ENCODE measurements at regions of chr12 and their contacts with region 1.

Region 1: DNA sequence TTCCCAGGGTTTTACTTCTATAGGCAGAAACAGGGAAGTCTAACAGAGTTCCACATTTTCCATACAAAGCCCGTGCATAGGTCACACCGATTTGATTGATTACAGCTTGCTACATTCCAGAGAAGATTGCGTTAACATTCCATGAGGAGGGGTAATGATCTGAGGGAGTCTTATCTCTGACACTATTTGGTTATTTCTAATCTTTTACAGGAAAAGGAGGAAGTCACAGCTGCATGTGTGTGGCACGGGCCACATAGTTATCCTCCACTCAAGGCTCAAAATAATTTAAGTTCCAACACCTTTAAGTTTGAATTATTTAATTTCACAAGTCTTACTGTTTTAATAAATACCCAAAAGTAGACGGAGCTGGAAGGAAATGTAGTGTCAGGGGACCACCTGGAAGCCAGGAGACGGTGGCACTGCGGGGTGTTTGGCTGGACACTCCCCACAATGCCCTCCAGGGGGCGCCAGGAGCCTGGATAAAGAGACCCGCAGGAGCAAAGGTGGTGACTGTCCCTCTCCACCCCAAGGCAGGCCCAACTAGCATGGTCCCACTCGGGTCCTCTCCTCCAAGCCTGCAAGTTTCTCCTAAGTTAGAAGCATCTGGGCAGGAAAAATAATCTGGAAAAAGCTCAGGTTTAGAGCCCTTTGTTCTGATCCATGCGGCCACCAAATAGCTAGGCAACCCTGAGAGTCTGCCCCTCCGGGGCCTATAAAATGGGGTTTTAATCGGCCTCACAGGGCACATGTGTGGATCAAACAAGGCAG is 20.2 kb downstream of the KRT8 start:
- DNase-seq: peak; percentile 61 to 90 (median 77)
- ATAC-seq: peak; percentile 88
- H3K4me3 ChIP-seq: no peak overlapping the region
- H3K4me3 Mint-ChIP-seq: no peak overlapping the region
- H3K27ac ChIP-seq: no peak overlapping the region
- H3K27ac Mint-ChIP-seq: no peak overlapping the region
- H3K4me1 ChIP-seq: peaks cover 5% of the 10 kb centered on the region
- H3K4me1 Mint-ChIP-seq: peaks cover 6% of the 10 kb centered on the region
- H3K27me3 ChIP-seq: no peaks in the 10 kb centered on the region
- H3K27me3 Mint-ChIP-seq: peaks cover 13% of the 10 kb centered on the region
- CTCF ChIP-seq: peak; percentile 88

Region 2: GRCh38 chr12:52568111-52568510 is 316.6 kb before region 1 on chr12:
- CTCF ChIA-PET with region 1: interaction called, 950 read pairs
- POLR2A ChIA-PET with region 1: no interaction called
- intact Hi-C with region 1: no loop called
- DNase-seq: no peak
- ATAC-seq: no peak
- H3K4me3 ChIP-seq: no peak overlapping the region
- H3K4me3 Mint-ChIP-seq: no peak overlapping the region
- H3K27ac ChIP-seq: no peak overlapping the region
- H3K27ac Mint-ChIP-seq: no peak overlapping the region
- H3K4me1 ChIP-seq: peaks cover 18% of the 10 kb centered on the region
- H3K4me1 Mint-ChIP-seq: peaks cover 8% of the 10 kb centered on the region
- H3K27me3 ChIP-seq: no peaks in the 10 kb centered on the region
- H3K27me3 Mint-ChIP-seq: peaks cover 25% of the 10 kb centered on the region
- CTCF ChIP-seq: no peak

Region 3: GRCh38 chr12:52895061-52895887 is 10.6 kb after region 1 on chr12:
- CTCF ChIA-PET with region 1: interaction called, 73 read pairs
- POLR2A ChIA-PET with region 1: no interaction called
- intact Hi-C with region 1: no loop called
- DNase-seq: no peak
- ATAC-seq: no peak
- H3K4me3 ChIP-seq: no peak overlapping the region
- H3K4me3 Mint-ChIP-seq: no peak overlapping the region
- H3K27ac ChIP-seq: no peak overlapping the region
- H3K27ac Mint-ChIP-seq: no peak overlapping the region
- H3K4me1 ChIP-seq: no peaks in the 10 kb centered on the region
- H3K4me1 Mint-ChIP-seq: no peaks in the 10 kb centered on the region
- H3K27me3 ChIP-seq: peaks cover 0 to 2% of the 10 kb centered on the region in 2 experiments
- H3K27me3 Mint-ChIP-seq: peaks cover 5% of the 10 kb centered on the region
- CTCF ChIP-seq: no peak

Region 4: DNA sequence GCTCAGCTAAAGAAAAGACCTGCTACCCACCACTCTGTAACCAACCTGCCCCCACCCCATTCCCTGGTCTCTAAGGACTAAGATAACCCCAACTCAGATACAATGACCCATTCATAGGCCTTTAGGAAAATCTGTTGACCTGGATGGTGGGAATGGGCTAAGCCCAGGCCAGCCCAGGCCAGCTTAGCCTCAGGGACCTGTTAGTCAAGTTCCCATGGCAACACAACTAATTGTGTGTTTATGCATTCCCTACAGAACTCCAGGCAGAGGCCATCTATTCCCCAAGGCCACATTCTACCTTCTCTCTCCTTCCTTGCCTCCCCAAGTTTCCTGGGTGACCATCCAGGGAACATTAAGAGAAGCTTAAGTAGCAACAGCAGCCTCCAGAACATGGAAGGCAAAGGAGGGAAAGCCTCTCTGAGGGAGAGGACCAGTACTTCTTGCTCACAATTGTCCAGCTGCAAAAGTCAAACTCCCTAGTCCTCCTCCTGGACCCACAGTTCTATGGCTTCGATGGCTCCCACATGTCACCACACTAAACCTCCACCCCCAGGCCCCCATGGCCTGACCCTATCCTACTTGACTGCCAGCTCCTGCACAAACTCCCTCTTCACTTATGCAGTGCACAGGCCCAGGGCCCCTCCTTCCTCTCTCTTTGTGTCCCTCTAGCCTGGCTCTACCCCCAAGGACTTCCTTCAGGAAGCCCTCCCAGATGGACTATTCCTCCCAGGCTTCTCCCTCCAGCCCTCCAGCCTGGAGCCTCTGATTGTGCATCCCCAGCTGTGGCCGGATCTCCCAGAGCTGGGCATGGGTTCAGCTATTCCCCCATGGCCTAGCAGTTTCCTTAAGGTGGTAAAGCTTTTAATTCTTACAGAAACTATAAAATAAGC is 36.5 kb after region 1 on chr12:
- CTCF ChIA-PET with region 1: interaction called, 24 read pairs
- POLR2A ChIA-PET with region 1: no interaction called
- intact Hi-C with region 1: no loop called
- DNase-seq: no peak
- ATAC-seq: no peak
- H3K4me3 ChIP-seq: no peak overlapping the region
- H3K4me3 Mint-ChIP-seq: no peak overlapping the region
- H3K27ac ChIP-seq: no peak overlapping the region
- H3K27ac Mint-ChIP-seq: no peak overlapping the region
- H3K4me1 ChIP-seq: no peaks in the 10 kb centered on the region
- H3K4me1 Mint-ChIP-seq: no peaks in the 10 kb centered on the region
- H3K27me3 ChIP-seq: peaks cover 0 to 2% of the 10 kb centered on the region in 2 experiments
- H3K27me3 Mint-ChIP-seq: no peaks in the 10 kb centered on the region
- CTCF ChIP-seq: no peak

Region 5: GRCh38 chr12:52969828-52970569 is 85.3 kb after region 1 on chr12:
- CTCF ChIA-PET with region 1: interaction called, 20 read pairs
- POLR2A ChIA-PET with region 1: no interaction called
- intact Hi-C with region 1: no loop called
- DNase-seq: no peak
- ATAC-seq: no peak
- H3K4me3 ChIP-seq: no peak overlapping the region
- H3K4me3 Mint-ChIP-seq: no peak overlapping the region
- H3K27ac ChIP-seq: no peak overlapping the region
- H3K27ac Mint-ChIP-seq: no peak overlapping the region
- H3K4me1 ChIP-seq: no peaks in the 10 kb centered on the region
- H3K4me1 Mint-ChIP-seq: no peaks in the 10 kb centered on the region
- H3K27me3 ChIP-seq: peaks cover 0 to 3% of the 10 kb centered on the region in 2 experiments
- H3K27me3 Mint-ChIP-seq: peaks cover 12% of the 10 kb centered on the region
- CTCF ChIP-seq: no peak